Posterior cingulate gyrus (tissue), 11 donors: ENCODE measurements at regions of chr3 and their contacts with region 1.

Region 1: GRCh38 chr3:134308350-134308891 is 57.8 kb upstream of the RYK start:
- DNase-seq: peak; percentile 70 to 97 (median 88)

Region 2: DNA sequence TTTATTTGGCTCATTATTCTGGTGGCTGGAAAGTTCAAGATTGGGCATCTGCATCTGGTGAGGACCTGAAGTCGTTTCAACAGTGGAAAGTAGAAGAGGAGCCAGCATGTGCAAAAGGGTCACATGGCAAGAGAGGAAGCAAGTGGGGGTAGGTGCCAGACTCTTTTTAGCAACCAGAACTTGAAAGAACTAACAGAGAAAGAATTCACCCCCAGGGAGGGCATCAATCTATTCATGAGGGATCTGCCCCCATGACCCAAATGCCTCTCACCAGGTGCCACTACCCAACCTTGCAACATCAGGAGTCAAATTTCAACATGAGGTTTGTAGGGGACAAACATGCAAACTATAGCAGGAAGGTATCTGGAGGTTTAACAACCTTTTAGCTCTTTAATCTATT is 47.4 kb before region 1 on chr3:
- intact Hi-C with region 1: no loop called
- DNase-seq: no peak

Region 3: GRCh38 chr3:134366928-134367811 is 58.7 kb after region 1 on chr3:
- intact Hi-C with region 1: loop called (anchors 2 kb)
- DNase-seq: peak; percentile 80 to 99 (median 90)